ENCODE measurements at regions of chr6 and their contacts with region 1.

Region 1: DNA sequence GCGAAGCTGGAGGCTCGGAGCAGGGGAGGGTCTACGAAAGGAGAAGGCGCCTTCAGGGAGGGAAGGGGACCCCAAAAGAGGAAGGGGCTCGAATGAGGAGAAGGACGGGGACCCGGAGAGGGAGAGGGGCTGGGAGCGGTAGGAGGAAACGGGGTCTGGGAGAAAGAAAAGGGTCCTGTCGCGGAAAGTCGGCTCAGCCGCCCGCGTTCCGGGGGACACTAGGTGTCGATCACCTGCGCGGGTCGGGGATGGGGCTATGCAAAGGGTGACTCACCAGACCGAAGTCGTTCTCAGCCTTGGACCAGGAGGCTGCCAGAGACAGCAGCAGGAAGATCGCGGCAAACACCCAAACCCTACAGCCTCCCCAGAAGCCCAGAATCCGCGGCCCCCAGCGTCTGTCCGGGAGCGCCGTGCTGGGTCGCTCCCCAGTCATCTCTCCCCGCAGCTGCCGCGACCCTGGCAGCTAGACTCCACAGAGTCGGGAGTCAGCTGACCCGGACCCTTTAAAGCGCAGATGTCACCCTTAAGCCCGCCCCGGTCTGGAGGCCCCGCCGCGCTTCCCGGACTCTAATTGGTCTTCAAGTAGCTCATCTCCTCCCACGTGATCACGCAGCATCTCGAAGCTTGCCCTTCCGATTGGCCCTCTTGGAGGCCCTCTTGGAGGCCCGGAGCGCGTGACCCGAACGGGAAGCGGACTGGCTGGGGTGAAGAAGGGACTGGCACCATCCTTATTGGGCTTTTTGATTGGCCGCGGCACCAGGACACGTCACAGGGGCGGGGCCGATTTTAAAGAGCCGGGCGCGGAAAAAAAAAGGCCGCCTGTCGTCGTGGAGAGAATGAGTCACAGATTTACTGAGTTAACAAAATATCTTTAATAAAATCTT is at the start of gene NEU1:
- DNase-seq: peak; percentile 95 to 100 (median 98)
- ATAC-seq: peak; percentile 93
- H3K4me3 ChIP-seq: peak within 1 kb of the TSS; percentile 99
- H3K4me3 Mint-ChIP-seq: peak within 1 kb of the TSS; percentile 88
- H3K27ac ChIP-seq: peak within 1 kb of the TSS; percentile 80 to 96
- H3K27ac Mint-ChIP-seq: peak within 1 kb of the TSS; percentile 91
- H3K4me1 ChIP-seq: peaks cover 37% of the 10 kb centered on the region
- H3K4me1 Mint-ChIP-seq: peaks cover 28% of the 10 kb centered on the region
- H3K27me3 ChIP-seq: no peaks in the 10 kb centered on the region
- H3K27me3 Mint-ChIP-seq: no peaks in the 10 kb centered on the region
- CTCF ChIP-seq: no peak
- total RNA-seq, gene NEU1: 19.7 to 21.1 TPM

Region 2: GRCh38 chr6:31399589-31400466 is 462.8 kb before region 1 on chr6:
- CTCF ChIA-PET with region 1: no interaction called
- POLR2A ChIA-PET with region 1: no interaction called
- intact Hi-C with region 1: no loop called
- DNase-seq: peak; percentile 28 to 81 (median 43)
- ATAC-seq: peak; percentile 21
- H3K4me3 ChIP-seq: peak overlapping the region; percentile 76
- H3K4me3 Mint-ChIP-seq: peak overlapping the region; percentile 92
- H3K27ac ChIP-seq: peak overlapping the region; percentile 72 to 79
- H3K27ac Mint-ChIP-seq: peak overlapping the region; percentile 81
- H3K4me1 ChIP-seq: peaks cover 65% of the 10 kb centered on the region
- H3K4me1 Mint-ChIP-seq: peaks cover 53% of the 10 kb centered on the region
- H3K27me3 ChIP-seq: no peaks in the 10 kb centered on the region
- H3K27me3 Mint-ChIP-seq: no peaks in the 10 kb centered on the region
- CTCF ChIP-seq: peak; percentile 83

Region 3: GRCh38 chr6:31485055-31485454 is 377.5 kb before region 1 on chr6:
- CTCF ChIA-PET with region 1: no interaction called
- POLR2A ChIA-PET with region 1: no interaction called
- intact Hi-C with region 1: no loop called
- DNase-seq: no peak
- ATAC-seq: no peak
- H3K4me3 ChIP-seq: no peak overlapping the region
- H3K4me3 Mint-ChIP-seq: no peak overlapping the region
- H3K27ac ChIP-seq: no peak overlapping the region
- H3K27ac Mint-ChIP-seq: no peak overlapping the region
- H3K4me1 ChIP-seq: no peaks in the 10 kb centered on the region
- H3K4me1 Mint-ChIP-seq: no peaks in the 10 kb centered on the region
- H3K27me3 ChIP-seq: no peaks in the 10 kb centered on the region
- H3K27me3 Mint-ChIP-seq: no peaks in the 10 kb centered on the region
- CTCF ChIP-seq: no peak

Region 4: GRCh38 chr6:31689249-31690110 is 173.1 kb before region 1 on chr6:
- CTCF ChIA-PET with region 1: no interaction called
- POLR2A ChIA-PET with region 1: no interaction called
- intact Hi-C with region 1: no loop called
- DNase-seq: peak in 3 of 14 experiments; percentile 11 to 41 (median 31)
- ATAC-seq: no peak
- H3K4me3 ChIP-seq: no peak overlapping the region
- H3K4me3 Mint-ChIP-seq: no peak overlapping the region
- H3K27ac ChIP-seq: no peak overlapping the region
- H3K27ac Mint-ChIP-seq: no peak overlapping the region
- H3K4me1 ChIP-seq: no peaks in the 10 kb centered on the region
- H3K4me1 Mint-ChIP-seq: no peaks in the 10 kb centered on the region
- H3K27me3 ChIP-seq: no peaks in the 10 kb centered on the region
- H3K27me3 Mint-ChIP-seq: no peaks in the 10 kb centered on the region
- CTCF ChIP-seq: peak; percentile 19

Region 5: DNA sequence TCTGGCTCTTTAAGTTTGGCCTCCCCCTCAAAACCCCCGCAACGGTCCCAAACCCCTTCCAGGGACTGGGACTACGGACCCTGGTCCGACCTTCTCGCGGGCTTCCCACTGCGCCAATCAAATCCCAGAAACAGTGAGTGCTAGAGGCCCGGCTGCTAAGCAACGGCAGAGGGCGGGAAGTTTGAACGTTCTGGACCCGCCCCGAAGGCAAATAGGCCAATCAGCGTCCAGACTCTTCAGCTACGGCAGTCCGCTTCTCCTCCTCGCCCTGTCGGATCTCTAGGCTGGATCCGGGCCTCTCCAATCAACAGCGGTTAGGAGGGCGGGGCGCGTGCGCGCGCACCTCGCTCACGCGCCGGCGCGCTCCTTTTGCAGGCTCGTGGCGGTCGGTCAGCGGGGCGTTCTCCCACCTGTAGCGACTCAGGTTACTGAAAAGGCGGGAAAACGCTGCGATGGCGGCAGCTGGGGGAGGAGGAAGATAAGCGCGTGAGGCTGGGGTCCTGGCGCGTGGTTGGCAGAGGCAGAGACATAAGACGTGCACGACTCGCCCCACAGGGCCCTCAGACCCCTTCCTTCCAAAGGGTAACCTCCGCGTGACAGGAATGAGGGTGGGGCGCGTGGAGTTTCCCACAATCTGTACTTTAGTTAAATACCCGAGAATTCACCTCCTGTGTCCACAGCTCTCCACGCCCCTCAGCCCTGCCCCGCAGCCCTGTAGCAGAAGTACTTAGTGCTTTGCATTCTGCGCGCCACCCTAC is 122.8 kb before region 1 on chr6 and contains the start of gene MSH5:
- CTCF ChIA-PET with region 1: no interaction called
- POLR2A ChIA-PET with region 1: interaction called, 14 read pairs
- intact Hi-C with region 1: no loop called
- DNase-seq: peak; percentile 85 to 98 (median 93)
- ATAC-seq: peak; percentile 85
- H3K4me3 ChIP-seq: peak within 1 kb of the TSS; percentile 87
- H3K4me3 Mint-ChIP-seq: peak within 1 kb of the TSS; percentile 90
- H3K27ac ChIP-seq: peak within 1 kb of the TSS; percentile 38 to 58
- H3K27ac Mint-ChIP-seq: peak within 1 kb of the TSS; percentile 85
- H3K4me1 ChIP-seq: peaks cover 53% of the 10 kb centered on the region
- H3K4me1 Mint-ChIP-seq: peaks cover 61% of the 10 kb centered on the region
- H3K27me3 ChIP-seq: no peaks in the 10 kb centered on the region
- H3K27me3 Mint-ChIP-seq: no peaks in the 10 kb centered on the region
- CTCF ChIP-seq: no peak
- total RNA-seq, gene MSH5: 13.6 to 13.7 TPM

Region 6: DNA sequence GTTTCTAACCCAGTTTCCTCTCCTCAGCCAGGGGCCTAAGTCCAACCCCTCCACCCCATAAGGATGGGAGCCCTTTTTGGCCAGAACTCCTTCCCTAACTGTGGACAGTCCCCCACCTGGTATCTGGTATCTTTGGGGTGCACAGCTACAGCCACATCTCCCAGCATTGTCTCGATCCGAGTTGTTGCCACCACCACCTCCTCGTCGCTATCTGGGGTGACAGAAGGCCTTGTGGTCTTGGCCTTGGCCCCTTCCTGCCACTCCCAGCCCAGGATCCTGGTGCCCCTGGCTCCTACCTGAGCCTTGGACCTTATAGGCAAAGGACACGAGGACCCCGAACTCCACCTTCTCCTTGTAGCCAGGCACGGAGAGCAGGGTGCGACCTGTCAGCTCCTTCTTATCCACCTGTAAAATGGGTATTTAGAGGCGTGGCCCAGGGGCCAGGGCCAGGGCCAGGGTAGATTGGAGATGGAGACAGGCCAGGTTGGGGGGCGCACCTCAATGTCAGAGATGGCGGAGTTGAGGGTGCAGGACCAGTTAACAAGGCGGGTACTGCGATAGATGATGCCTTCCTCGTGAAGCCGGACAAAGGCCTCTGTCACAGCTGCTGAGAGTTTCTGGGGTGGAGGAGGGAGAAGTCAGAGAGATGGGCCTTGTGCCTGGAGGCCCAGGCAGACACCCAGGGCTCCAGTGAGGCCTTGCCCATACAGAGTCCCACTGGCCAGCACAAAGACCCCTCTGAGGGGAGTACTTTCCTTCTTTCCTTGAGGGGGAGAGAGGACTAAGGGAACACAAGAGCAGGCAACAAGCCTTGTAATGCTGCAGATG is 78.3 kb before region 1 on chr6:
- CTCF ChIA-PET with region 1: no interaction called
- POLR2A ChIA-PET with region 1: no interaction called
- intact Hi-C with region 1: no loop called
- DNase-seq: no peak
- ATAC-seq: no peak
- H3K4me3 ChIP-seq: no peak overlapping the region
- H3K4me3 Mint-ChIP-seq: no peak overlapping the region
- H3K27ac ChIP-seq: no peak overlapping the region
- H3K27ac Mint-ChIP-seq: no peak overlapping the region
- H3K4me1 ChIP-seq: peaks cover under 1% of the 10 kb centered on the region
- H3K4me1 Mint-ChIP-seq: no peaks in the 10 kb centered on the region
- H3K27me3 ChIP-seq: no peaks in the 10 kb centered on the region
- H3K27me3 Mint-ChIP-seq: no peaks in the 10 kb centered on the region
- CTCF ChIP-seq: no peak

Region 7: DNA sequence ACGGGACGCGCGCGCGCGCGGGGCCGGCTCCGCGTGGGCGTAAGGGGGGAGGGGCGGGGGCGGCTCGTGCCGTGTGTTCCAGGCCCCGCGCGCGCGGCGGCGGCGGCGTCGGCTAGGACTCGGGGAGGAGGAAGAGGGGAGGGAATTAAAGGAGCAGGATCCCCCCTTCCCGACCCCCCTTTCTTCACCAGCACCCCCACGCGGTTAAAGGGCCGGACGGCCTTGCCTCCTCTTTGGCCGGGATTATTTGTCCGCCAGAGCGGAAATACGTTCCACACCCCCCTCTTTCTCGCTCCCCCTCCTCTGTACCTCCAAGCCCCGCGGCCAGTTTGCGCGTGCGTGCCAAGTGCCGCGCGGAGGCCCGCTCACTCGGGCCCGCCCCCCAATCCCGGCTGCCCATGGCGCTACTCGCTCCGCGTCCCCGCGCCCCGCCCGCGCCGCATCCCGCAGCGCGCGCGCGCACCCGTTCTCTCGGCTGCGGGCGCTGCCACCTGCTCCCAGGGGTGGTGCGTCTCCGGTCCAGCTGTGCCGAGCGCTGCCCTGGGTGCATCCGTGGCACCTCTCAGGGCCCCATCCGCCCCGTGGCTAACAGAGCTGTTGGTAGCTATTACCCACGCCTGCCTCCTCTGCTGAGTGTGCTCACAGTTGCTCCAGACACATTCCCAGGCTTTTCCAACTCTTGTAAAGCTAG is 39.5 kb after region 1 on chr6 and contains the start of gene ZBTB12:
- CTCF ChIA-PET with region 1: no interaction called
- POLR2A ChIA-PET with region 1: interaction called, 21 read pairs
- intact Hi-C with region 1: loop called (anchors 2 kb)
- DNase-seq: peak; percentile 67 to 94 (median 84)
- ATAC-seq: peak; percentile 48
- H3K4me3 ChIP-seq: peak within 1 kb of the TSS; percentile 68
- H3K4me3 Mint-ChIP-seq: peak within 1 kb of the TSS; percentile 89
- H3K27ac ChIP-seq: peak within 1 kb of the TSS; percentile 13 to 72
- H3K27ac Mint-ChIP-seq: peak within 1 kb of the TSS; percentile 65
- H3K4me1 ChIP-seq: peaks cover 39% of the 10 kb centered on the region
- H3K4me1 Mint-ChIP-seq: peaks cover 35% of the 10 kb centered on the region
- H3K27me3 ChIP-seq: no peaks in the 10 kb centered on the region
- H3K27me3 Mint-ChIP-seq: no peaks in the 10 kb centered on the region
- CTCF ChIP-seq: no peak
- total RNA-seq, gene ZBTB12: 0.28 to 0.33 TPM

Region 8: DNA sequence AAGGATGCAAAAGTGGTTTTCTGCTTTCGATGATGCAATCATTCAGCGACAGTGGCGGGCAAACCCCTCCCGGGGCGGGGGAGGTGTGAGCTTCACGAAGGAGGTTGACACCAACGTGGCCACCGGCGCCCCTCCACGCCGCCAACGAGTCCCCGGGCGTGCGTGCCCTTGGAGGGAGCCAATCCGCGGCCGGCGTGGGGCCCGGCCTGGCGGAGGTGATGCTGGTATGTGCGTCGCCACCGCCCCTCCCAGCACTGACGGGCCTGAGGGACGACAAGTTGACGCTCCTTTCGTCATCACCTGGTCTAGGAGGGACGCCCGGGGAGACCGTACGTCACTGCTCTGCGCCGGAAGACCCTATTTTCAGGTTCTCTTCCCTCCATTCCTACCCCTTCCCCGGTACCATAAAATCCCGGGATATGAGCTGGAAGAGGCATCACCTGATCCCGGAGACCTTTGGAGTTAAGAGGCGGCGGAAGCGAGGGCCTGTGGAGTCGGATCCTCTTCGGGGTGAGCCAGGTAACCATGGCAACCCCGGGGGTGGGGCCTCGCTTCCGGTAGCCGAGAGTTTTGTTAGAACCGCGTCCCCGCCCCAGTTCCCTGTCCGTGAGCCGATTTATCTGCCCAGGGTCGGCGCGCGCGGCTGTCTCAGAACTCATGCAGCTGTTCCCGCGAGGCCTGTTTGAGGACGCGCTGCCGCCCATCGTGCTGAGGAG is 109.6 kb after region 1 on chr6 and contains the start of gene DXO:
- CTCF ChIA-PET with region 1: no interaction called
- POLR2A ChIA-PET with region 1: interaction called, 10 read pairs
- intact Hi-C with region 1: no loop called
- DNase-seq: peak; percentile 87 to 99 (median 95)
- ATAC-seq: peak; percentile 91
- H3K4me3 ChIP-seq: peak within 1 kb of the TSS; percentile 84
- H3K4me3 Mint-ChIP-seq: peak within 1 kb of the TSS; percentile 100
- H3K27ac ChIP-seq: peak within 1 kb of the TSS; percentile 99 to 100
- H3K27ac Mint-ChIP-seq: peak within 1 kb of the TSS; percentile 100
- H3K4me1 ChIP-seq: peaks cover 32% of the 10 kb centered on the region
- H3K4me1 Mint-ChIP-seq: peaks cover 34% of the 10 kb centered on the region
- H3K27me3 ChIP-seq: no peaks in the 10 kb centered on the region
- H3K27me3 Mint-ChIP-seq: peaks cover 6% of the 10 kb centered on the region
- CTCF ChIP-seq: no peak
- total RNA-seq, gene DXO: 30.0 to 31.1 TPM

Measured in CD4-positive, alpha-beta T cell (primary cell).